Activated CD8-positive, alpha-beta T cell treated with anti-CD3 and anti-CD28 coated beads for 36 hours (primary cell): ENCODE measurements at regions of chr6 and their contacts with region 1.

Region 1: GRCh38 chr6:137224799-137225198 is 5.6 kb upstream of the IFNGR1 start:
- DNase-seq: peak; percentile 9
- ATAC-seq: peak; percentile 25
- H3K4me3 Mint-ChIP-seq: no peak overlapping the region
- H3K27ac Mint-ChIP-seq: no peak overlapping the region
- H3K4me1 Mint-ChIP-seq: peaks cover 39% of the 10 kb centered on the region
- H3K27me3 Mint-ChIP-seq: peaks cover 6% of the 10 kb centered on the region
- CTCF ChIP-seq: no peak

Region 2: DNA sequence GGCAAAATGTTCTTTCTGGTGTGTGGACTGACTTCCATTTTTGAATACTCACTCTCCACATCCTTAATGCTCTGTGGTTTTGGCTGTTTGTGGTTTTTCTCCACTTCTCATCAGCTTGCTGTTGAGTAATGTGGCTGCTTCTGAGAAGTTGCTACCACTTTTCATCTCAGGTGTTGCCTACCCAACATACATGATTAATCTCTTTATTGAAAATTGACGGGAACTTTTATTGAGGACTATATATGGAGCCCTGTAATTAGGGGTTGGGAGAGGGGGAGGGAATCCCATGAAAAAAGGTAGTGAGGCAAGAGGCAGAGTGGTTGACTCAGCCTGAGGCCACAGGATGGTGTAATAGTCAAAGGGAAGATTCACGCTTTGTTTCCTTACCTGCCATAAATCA is 69.0 kb before region 1 on chr6:
- CTCF ChIA-PET with region 1: no interaction called
- POLR2A ChIA-PET with region 1: no interaction called
- intact Hi-C with region 1: loop called (anchors 5 kb)
- DNase-seq: peak; percentile 62
- ATAC-seq: peak; percentile 88
- H3K4me3 Mint-ChIP-seq: no peak overlapping the region
- H3K27ac Mint-ChIP-seq: peak overlapping the region; percentile 36
- H3K4me1 Mint-ChIP-seq: peaks cover 16% of the 10 kb centered on the region
- H3K27me3 Mint-ChIP-seq: peaks cover 14% of the 10 kb centered on the region
- CTCF ChIP-seq: no peak